Panc1 (cell line): ENCODE measurements at regions of chr6 and their contacts with region 1.

Region 1: GRCh38 chr6:128259730-128260685 is 260.4 kb downstream of the PTPRK start:
- DNase-seq: no peak
- ATAC-seq: no peak
- H3K4me3 ChIP-seq: no peak overlapping the region
- H3K27ac ChIP-seq: no peak overlapping the region
- H3K4me1 ChIP-seq: no peaks in the 10 kb centered on the region
- H3K27me3 ChIP-seq: no peaks in the 10 kb centered on the region
- CTCF ChIP-seq: no peak

Region 2: GRCh38 chr6:128078276-128078675 is 181.7 kb before region 1 on chr6:
- CTCF ChIA-PET with region 1: no interaction called
- POLR2A ChIA-PET with region 1: no interaction called
- in situ Hi-C with region 1: no loop called
- intact Hi-C with region 1: no loop called
- DNase-seq: no peak
- ATAC-seq: no peak
- H3K4me3 ChIP-seq: no peak overlapping the region
- H3K27ac ChIP-seq: no peak overlapping the region
- H3K4me1 ChIP-seq: no peaks in the 10 kb centered on the region
- H3K27me3 ChIP-seq: no peaks in the 10 kb centered on the region
- CTCF ChIP-seq: no peak

Region 3: GRCh38 chr6:128139519-128139918 is 120.5 kb before region 1 on chr6:
- CTCF ChIA-PET with region 1: no interaction called
- POLR2A ChIA-PET with region 1: interaction called, 15 read pairs
- in situ Hi-C with region 1: no loop called
- intact Hi-C with region 1: no loop called
- DNase-seq: peak; percentile 7
- ATAC-seq: no peak
- H3K4me3 ChIP-seq: no peak overlapping the region
- H3K27ac ChIP-seq: no peak overlapping the region
- H3K4me1 ChIP-seq: no peaks in the 10 kb centered on the region; the same call in 1 of the 2 replicates
- H3K27me3 ChIP-seq: no peaks in the 10 kb centered on the region
- CTCF ChIP-seq: no peak

Region 4: GRCh38 chr6:128240024-128240428 is 20.0 kb before region 1 on chr6:
- CTCF ChIA-PET with region 1: no interaction called
- POLR2A ChIA-PET with region 1: no interaction called
- in situ Hi-C with region 1: no loop called
- intact Hi-C with region 1: no loop called
- DNase-seq: no peak
- ATAC-seq: no peak
- H3K4me3 ChIP-seq: no peak overlapping the region
- H3K27ac ChIP-seq: no peak overlapping the region
- H3K4me1 ChIP-seq: no peaks in the 10 kb centered on the region
- H3K27me3 ChIP-seq: no peaks in the 10 kb centered on the region
- CTCF ChIP-seq: no peak

Region 5: GRCh38 chr6:129195643-129196042 is 935.6 kb after region 1 on chr6:
- CTCF ChIA-PET with region 1: no interaction called
- POLR2A ChIA-PET with region 1: no interaction called
- in situ Hi-C with region 1: no loop called
- intact Hi-C with region 1: no loop called
- DNase-seq: no peak
- ATAC-seq: no peak
- H3K4me3 ChIP-seq: no peak overlapping the region
- H3K27ac ChIP-seq: no peak overlapping the region
- H3K4me1 ChIP-seq: 0 out of 2 replicates have a peak, but pooled peaks cover 3% of the 10 kb centered on the region
- H3K27me3 ChIP-seq: no peaks in the 10 kb centered on the region
- CTCF ChIP-seq: no peak